PC-9 (cell line): ENCODE measurements at regions of chr16 and their contacts with region 1.

Region 1: GRCh38 chr16:25126820-25127232 is 15.3 kb downstream of the LCMT1 start:
- DNase-seq: peak; percentile 67 to 81
- H3K4me3 ChIP-seq: no peak overlapping the region
- H3K27ac ChIP-seq: no peak overlapping the region
- H3K4me1 ChIP-seq: peaks cover 9% of the 10 kb centered on the region; the same call in 1 of the 2 replicates
- H3K27me3 ChIP-seq: no peaks in the 10 kb centered on the region
- CTCF ChIP-seq: peak; percentile 77

Region 2: GRCh38 chr16:24353622-24354021 is 773.2 kb before region 1 on chr16:
- CTCF ChIA-PET with region 1: no interaction called
- POLR2A ChIA-PET with region 1: interaction called, 20 read pairs
- intact Hi-C with region 1: no loop called
- DNase-seq: no peak
- H3K4me3 ChIP-seq: no peak overlapping the region
- H3K27ac ChIP-seq: no peak overlapping the region
- H3K4me1 ChIP-seq: no peaks in the 10 kb centered on the region
- H3K27me3 ChIP-seq: peaks cover 76% of the 10 kb centered on the region
- CTCF ChIP-seq: no peak